Breast epithelium (tissue), 4 donors: ENCODE measurements at regions of chr6 and their contacts with region 1.

Region 1: DNA sequence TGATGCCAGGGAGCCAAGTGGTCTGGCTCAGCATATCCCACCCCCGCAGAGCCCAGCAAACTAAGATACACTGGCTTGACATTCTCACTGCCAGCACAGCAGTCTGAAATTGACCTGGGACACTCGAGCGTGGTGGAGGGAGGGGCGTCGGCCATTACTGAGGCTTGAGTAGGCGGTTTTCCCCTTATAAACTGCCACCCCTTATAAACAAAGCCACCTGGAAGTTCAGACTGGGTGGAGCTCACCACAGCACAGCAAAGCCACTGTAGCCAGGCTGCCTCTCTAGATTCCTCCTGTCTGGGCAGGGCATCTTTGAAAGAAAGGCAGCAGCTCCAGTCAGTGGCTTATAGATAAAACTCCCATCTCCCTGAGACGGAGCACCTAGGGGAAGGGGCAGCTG is 19.4 kb downstream of the TINAG start:
- DNase-seq: no peak
- H3K4me3 ChIP-seq: no peak overlapping the region
- H3K27ac ChIP-seq: no peak overlapping the region
- H3K4me1 ChIP-seq: no peaks in the 10 kb centered on the region
- H3K27me3 ChIP-seq: no peaks in the 10 kb centered on the region
- CTCF ChIP-seq: no peak
- POLR2A ChIP-seq: no peak

Region 2: DNA sequence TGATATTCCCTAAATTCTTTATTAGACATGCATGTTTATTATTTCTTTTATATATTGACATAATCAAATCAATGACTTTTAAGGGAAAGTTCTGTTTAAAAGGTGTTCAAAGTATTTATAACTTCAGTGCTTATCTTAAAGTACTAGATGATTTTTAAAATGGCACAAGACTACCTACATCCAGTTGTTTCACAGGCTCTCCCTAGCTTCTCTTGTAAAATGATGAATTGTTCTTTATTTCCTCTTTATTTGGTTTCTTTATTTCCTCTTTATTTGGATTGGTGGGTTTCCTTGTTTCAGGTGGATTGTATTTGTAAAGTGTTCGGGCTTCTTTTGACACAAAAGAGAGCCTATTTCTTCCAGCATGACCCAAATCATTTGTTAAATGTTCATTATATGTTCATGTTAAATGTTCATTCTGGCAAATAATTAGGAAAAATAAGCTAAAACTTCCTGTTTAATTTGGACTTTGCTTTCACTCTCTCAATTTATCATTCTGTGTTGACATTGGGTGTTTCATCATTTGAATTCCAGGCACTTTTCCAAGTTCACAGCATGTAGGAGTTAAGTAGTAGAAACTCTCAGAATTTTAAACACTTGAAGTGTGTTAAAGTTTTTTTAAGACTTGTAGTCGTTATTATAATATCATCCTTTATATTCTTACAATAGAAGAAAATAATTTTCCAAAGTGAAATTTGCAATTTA is 191.8 kb before region 1 on chr6:
- intact Hi-C with region 1: loop called (anchors 5 kb)
- DNase-seq: no peak
- H3K4me3 ChIP-seq: no peak overlapping the region
- H3K27ac ChIP-seq: no peak overlapping the region
- H3K4me1 ChIP-seq: no peaks in the 10 kb centered on the region
- H3K27me3 ChIP-seq: no peaks in the 10 kb centered on the region
- CTCF ChIP-seq: no peak
- POLR2A ChIP-seq: no peak

Region 3: DNA sequence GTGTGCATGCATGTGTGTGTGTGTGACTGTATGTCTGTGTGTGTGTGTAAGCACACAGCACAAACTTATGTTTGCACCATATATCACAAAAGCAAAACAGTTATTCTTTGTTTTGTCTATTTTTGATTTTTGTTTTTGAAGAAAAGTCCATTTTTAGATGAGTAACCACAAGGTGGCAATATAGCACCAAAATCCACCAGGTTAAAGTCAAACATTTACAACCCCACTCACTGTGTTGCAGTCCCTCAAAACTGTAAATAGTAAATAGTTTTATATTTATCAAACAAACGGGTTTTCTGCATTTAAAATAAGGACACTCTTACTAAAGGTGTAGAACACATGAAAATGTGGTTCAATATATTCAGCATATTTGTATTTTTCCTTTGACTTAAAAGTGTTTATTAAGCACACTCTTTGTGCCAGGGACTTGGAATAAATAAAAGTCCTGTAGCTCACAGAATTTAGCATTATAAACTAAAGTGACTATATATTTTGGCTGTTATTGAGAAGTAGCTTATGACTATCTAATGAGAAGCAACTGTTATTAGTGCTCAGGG is 1118.1 kb after region 1 on chr6:
- intact Hi-C with region 1: no loop called
- DNase-seq: no peak
- H3K4me3 ChIP-seq: no peak overlapping the region
- H3K27ac ChIP-seq: no peak overlapping the region
- H3K4me1 ChIP-seq: no peaks in the 10 kb centered on the region
- H3K27me3 ChIP-seq: no peaks in the 10 kb centered on the region
- CTCF ChIP-seq: peak; percentile 50 to 78 (median 61)
- POLR2A ChIP-seq: no peak